ENCODE measurements at regions of chr19 and their contacts with region 1.

Region 1: DNA sequence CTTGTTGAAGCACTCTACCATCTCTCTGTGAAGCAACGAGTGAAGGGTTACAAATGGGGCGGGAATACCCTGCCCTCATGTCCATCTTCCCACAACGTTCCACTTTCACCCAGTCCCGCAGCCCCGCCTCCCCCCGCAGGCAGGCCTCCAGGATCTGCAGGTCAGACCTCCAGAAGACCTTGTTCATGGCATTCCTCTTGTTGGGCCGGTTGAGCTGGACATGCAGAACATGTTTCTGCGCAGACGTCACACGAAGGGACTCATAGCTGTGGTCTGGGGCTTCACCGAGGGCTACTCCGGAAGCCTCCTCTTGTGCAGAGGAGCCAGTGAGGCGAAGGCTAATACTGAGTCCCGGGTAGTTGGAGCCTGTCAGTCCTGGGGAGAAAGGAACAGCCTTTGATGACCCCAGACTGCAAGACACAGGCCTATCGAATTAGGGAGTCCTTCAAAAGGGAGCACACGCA is 420 bp downstream of the ECH1 start:
- DNase-seq: peak in 2 of 5 donors; percentile 13 to 58
- H3K4me3 ChIP-seq: peak overlapping the region; percentile 90
- H3K4me3 Mint-ChIP-seq: peak overlapping the region; percentile 85 to 96 (median 93)
- H3K27ac ChIP-seq: peak overlapping the region; percentile 89
- H3K27ac Mint-ChIP-seq: peak overlapping the region; percentile 83 to 98 (median 97)
- H3K4me1 ChIP-seq: peaks cover 17% of the 10 kb centered on the region
- H3K4me1 Mint-ChIP-seq: peaks cover 25 to 54% (median 44%) of the 10 kb centered on the region in 3 donors
- H3K27me3 ChIP-seq: no peaks in the 10 kb centered on the region
- H3K27me3 Mint-ChIP-seq: no peaks in the 10 kb centered on the region

Region 2: GRCh38 chr19:38583219-38583984 is 247.8 kb before region 1 on chr19:
- CTCF ChIA-PET with region 1: no interaction called
- POLR2A ChIA-PET with region 1: no interaction called
- DNase-seq: no peak
- H3K4me3 ChIP-seq: no peak overlapping the region
- H3K4me3 Mint-ChIP-seq: no peak overlapping the region
- H3K27ac ChIP-seq: no peak overlapping the region
- H3K27ac Mint-ChIP-seq: peak overlapping the region in 6 of 8 donors; percentile 2 to 89 (median 47)
- H3K4me1 ChIP-seq: peaks cover 6% of the 10 kb centered on the region
- H3K4me1 Mint-ChIP-seq: peaks cover 17 to 28% (median 27%) of the 10 kb centered on the region in 3 donors
- H3K27me3 ChIP-seq: no peaks in the 10 kb centered on the region
- H3K27me3 Mint-ChIP-seq: no peaks in the 10 kb centered on the region

Region 3: DNA sequence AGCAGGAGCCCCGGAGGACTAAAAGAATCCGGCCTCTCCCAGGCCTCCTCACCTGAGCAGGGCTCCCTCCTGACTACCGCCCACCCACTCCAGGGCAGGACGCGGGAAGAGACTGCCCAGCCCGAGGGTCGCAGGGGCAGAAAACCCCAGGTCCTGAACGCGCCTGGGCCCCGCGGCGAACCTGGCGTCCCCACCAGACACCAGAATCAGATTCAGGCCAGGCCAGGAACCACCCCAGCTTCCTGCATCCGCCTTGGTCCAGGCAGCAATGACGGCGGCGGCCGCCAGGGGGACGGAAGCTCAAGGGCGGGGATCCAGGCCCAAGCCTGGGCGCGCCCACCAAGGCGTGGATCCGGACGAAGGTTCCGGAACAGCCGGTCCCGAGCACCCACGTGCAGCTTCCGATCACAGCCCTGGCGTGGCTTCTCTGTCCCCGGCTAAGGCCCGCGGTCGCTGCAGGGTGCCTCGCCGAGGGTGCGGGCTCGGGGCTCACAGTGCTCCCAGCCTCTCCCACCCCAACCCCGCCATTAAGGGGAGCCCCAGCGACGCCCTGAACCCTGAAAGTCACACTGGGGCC is 61.5 kb before region 1 on chr19:
- CTCF ChIA-PET with region 1: interaction called, 8 read pairs
- POLR2A ChIA-PET with region 1: interaction called, 17 read pairs
- DNase-seq: peak; percentile 86 to 93 (median 91)
- H3K4me3 ChIP-seq: no peak overlapping the region
- H3K4me3 Mint-ChIP-seq: peak overlapping the region; percentile 53 to 66 (median 60)
- H3K27ac ChIP-seq: no peak overlapping the region
- H3K27ac Mint-ChIP-seq: peak overlapping the region; percentile 63 to 94 (median 88)
- H3K4me1 ChIP-seq: peaks cover 6% of the 10 kb centered on the region
- H3K4me1 Mint-ChIP-seq: peaks cover 6 to 10% (median 7%) of the 10 kb centered on the region in 3 donors
- H3K27me3 ChIP-seq: no peaks in the 10 kb centered on the region
- H3K27me3 Mint-ChIP-seq: no peaks in the 10 kb centered on the region

Region 4: DNA sequence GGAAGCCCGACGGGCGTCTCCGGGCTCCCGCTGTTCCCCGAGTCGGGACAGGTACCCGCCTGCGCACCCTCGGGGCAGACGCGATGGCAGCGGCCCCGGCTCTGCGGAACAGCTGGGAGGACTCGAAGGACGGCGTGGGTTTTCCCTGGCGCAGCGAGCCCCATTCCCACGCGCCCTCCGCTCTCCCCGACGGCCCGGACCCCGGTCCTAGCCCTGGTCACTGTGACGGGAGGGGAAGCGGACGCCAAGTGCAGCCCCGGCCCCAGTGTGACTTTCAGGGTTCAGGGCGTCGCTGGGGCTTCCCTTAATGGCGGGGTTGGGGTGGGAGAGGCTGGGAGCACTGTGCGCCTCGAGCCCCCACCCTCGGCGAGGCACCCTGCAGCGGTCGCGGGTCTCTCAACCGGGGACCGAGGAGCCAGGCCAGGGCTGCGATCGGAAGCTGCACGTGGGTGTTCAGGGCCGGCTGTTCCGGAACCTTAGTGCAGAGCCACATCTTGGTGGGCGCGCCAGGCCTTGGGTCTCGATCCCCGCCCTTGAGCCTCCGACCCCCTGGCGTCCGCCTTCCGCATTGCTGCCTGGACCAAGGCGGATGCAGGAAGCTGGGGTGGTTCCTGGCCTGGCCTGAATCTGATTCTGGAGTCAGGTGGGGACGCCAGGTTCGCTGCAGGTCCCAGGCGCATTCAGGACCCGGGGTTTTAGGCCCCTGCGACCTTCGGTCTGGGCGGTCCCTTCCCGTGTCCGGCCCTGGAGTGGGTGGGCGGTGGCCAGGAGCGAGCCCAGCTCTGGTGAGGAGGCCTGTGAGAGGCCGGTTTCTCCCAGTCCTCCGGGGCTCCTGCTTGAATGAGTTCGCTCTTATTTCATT is 38.7 kb before region 1 on chr19:
- CTCF ChIA-PET with region 1: no interaction called
- POLR2A ChIA-PET with region 1: no interaction called
- DNase-seq: peak in 3 of 5 donors; percentile 15 to 67 (median 31)
- H3K4me3 ChIP-seq: no peak overlapping the region
- H3K4me3 Mint-ChIP-seq: peak overlapping the region in 6 of 7 donors; percentile 56 to 92 (median 67)
- H3K27ac ChIP-seq: no peak overlapping the region
- H3K27ac Mint-ChIP-seq: peak overlapping the region in 1 of 8 donors; percentile 80
- H3K4me1 ChIP-seq: no peaks in the 10 kb centered on the region
- H3K4me1 Mint-ChIP-seq: peaks cover 4 to 9% (median 6%) of the 10 kb centered on the region in 3 donors
- H3K27me3 ChIP-seq: no peaks in the 10 kb centered on the region
- H3K27me3 Mint-ChIP-seq: no peaks in the 10 kb centered on the region

Region 5: DNA sequence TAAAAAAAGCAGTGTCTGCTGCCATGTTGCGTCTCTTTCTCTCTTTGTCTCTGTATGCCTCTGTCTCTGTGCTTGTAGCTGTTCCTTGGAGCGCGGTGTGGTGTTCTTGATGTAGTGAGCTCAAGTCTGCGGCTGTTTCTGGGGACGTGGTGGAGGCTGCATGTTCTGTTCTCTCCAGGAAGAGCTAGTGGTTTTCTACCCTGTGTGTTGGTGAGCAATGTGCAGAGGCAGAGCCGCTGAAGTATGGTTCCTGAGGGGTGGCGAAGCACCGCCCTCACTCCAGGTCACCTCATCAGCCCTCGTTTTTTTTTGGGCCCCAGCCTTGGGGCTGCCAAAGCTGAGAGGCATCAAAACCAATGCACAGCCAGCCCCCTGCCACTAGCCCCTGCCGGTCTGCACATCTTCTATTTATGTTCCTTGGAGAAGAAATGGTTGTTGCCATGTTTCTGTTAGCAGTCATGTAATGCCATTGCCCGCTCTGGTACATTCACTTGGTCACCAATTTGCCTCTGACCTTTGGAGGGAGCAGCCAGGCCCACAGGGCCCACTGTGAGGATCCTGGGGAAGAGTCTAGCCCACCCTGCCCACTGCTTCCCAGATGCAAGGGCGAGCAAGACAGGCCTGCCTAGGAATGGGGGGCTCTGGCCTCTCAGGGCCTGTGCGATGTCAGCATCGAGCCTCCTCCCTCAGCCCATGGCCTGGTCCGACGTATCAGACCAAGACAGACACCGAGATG is 11.4 kb after region 1 on chr19:
- CTCF ChIA-PET with region 1: interaction called, 4 read pairs
- POLR2A ChIA-PET with region 1: interaction called, 48 read pairs
- DNase-seq: peak; percentile 36 to 84 (median 78)
- H3K4me3 ChIP-seq: peak overlapping the region; percentile 33
- H3K4me3 Mint-ChIP-seq: peak overlapping the region; percentile 70 to 91 (median 76)
- H3K27ac ChIP-seq: no peak overlapping the region
- H3K27ac Mint-ChIP-seq: peak overlapping the region; percentile 84 to 95 (median 92)
- H3K4me1 ChIP-seq: peaks cover 71% of the 10 kb centered on the region
- H3K4me1 Mint-ChIP-seq: peaks cover 63 to 80% (median 65%) of the 10 kb centered on the region in 3 donors
- H3K27me3 ChIP-seq: no peaks in the 10 kb centered on the region
- H3K27me3 Mint-ChIP-seq: peaks cover 0 to 10% of the 10 kb centered on the region in 2 donors